CD4-positive, alpha-beta T cell (primary cell): ENCODE measurements at regions of chr1 and their contacts with region 1.

Region 1: DNA sequence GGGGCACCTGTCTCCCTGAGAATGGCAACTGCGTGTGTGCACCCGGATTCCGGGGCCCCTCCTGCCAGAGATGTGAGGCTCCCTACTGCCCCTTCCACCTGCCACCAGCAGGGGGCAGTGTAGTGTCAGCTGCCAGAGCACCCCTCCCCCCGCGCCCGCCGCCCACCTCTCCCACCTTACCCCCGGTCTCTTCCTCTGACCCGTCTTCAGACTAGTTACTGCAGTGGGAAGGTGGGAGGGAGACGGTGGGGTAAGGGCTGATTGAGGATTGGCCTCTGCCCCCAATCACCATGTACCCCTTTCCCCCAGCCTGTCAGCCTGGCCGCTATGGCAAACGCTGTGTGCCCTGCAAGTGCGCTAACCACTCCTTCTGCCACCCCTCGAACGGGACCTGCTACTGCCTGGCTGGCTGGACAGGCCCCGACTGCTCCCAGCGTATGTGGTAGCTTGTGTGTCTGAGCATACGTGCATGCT is 10.1 kb upstream of the LRRC71 start:
- DNase-seq: peak; percentile 17 to 79 (median 48)
- ATAC-seq: peak; percentile 70
- H3K4me3 ChIP-seq: no peak overlapping the region
- H3K4me3 Mint-ChIP-seq: no peak overlapping the region
- H3K27ac ChIP-seq: no peak overlapping the region
- H3K27ac Mint-ChIP-seq: no peak overlapping the region
- H3K4me1 ChIP-seq: no peaks in the 10 kb centered on the region
- H3K4me1 Mint-ChIP-seq: no peaks in the 10 kb centered on the region
- H3K27me3 ChIP-seq: peaks cover 0 to 7% of the 10 kb centered on the region in 2 experiments
- H3K27me3 Mint-ChIP-seq: peaks cover 32% of the 10 kb centered on the region
- CTCF ChIP-seq: peak; percentile 83

Region 2: GRCh38 chr1:156961709-156962108 is 51.4 kb after region 1 on chr1:
- CTCF ChIA-PET with region 1: no interaction called
- POLR2A ChIA-PET with region 1: no interaction called
- intact Hi-C with region 1: loop called in 1 of 2 experiments (anchors 5 kb)
- DNase-seq: peak in 9 of 14 experiments; percentile 2 to 64 (median 35)
- ATAC-seq: peak; percentile 81
- H3K4me3 ChIP-seq: no peak overlapping the region
- H3K4me3 Mint-ChIP-seq: peak overlapping the region; percentile 72
- H3K27ac ChIP-seq: no peak overlapping the region
- H3K27ac Mint-ChIP-seq: peak overlapping the region; percentile 44
- H3K4me1 ChIP-seq: peaks cover 37% of the 10 kb centered on the region
- H3K4me1 Mint-ChIP-seq: peaks cover 55% of the 10 kb centered on the region
- H3K27me3 ChIP-seq: no peaks in the 10 kb centered on the region
- H3K27me3 Mint-ChIP-seq: no peaks in the 10 kb centered on the region
- CTCF ChIP-seq: peak; percentile 55

Region 3: GRCh38 chr1:156970017-156970416 is 59.7 kb after region 1 on chr1:
- CTCF ChIA-PET with region 1: no interaction called
- POLR2A ChIA-PET with region 1: no interaction called
- intact Hi-C with region 1: loop called in 1 of 2 experiments (anchors 2 kb)
- DNase-seq: peak in 3 of 14 experiments; percentile 26 to 28 (median 27)
- ATAC-seq: peak; percentile 34
- H3K4me3 ChIP-seq: no peak overlapping the region
- H3K4me3 Mint-ChIP-seq: no peak overlapping the region
- H3K27ac ChIP-seq: no peak overlapping the region
- H3K27ac Mint-ChIP-seq: no peak overlapping the region
- H3K4me1 ChIP-seq: no peaks in the 10 kb centered on the region
- H3K4me1 Mint-ChIP-seq: no peaks in the 10 kb centered on the region
- H3K27me3 ChIP-seq: peaks cover 0 to 11% of the 10 kb centered on the region in 2 experiments
- H3K27me3 Mint-ChIP-seq: peaks cover 15% of the 10 kb centered on the region
- CTCF ChIP-seq: peak; percentile 41

Region 4: DNA sequence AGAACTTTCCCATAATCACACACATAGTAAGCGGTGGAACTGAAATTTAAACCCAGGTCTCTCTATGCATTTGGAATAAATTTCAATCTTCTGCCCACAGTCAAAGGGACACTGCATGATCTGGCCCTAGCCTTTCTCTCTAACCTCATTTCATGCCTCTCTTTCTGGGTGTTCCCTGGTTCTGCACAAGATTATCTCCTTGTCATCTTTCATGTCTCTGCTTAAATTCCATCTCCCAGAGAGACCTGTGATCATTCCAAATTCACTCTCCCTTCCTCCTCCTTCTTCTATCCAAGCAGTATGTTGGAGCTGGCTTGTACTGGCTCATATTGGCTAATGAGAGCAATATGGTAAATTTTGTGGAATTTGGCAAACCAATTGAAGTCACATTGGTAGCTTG is 167.0 kb after region 1 on chr1:
- CTCF ChIA-PET with region 1: interaction called, 3 read pairs
- POLR2A ChIA-PET with region 1: no interaction called
- intact Hi-C with region 1: loop called in 1 of 2 experiments (anchors 5 kb)
- DNase-seq: no peak
- ATAC-seq: no peak
- H3K4me3 ChIP-seq: no peak overlapping the region
- H3K4me3 Mint-ChIP-seq: no peak overlapping the region
- H3K27ac ChIP-seq: no peak overlapping the region
- H3K27ac Mint-ChIP-seq: no peak overlapping the region
- H3K4me1 ChIP-seq: peaks cover 6% of the 10 kb centered on the region
- H3K4me1 Mint-ChIP-seq: no peaks in the 10 kb centered on the region
- H3K27me3 ChIP-seq: peaks cover 6 to 16% of the 10 kb centered on the region in 2 experiments
- H3K27me3 Mint-ChIP-seq: peaks cover 33% of the 10 kb centered on the region
- CTCF ChIP-seq: no peak